Activated CD4-positive, alpha-beta memory T cell treated with anti-CD3 and anti-CD28 coated beads for 36 hours (primary cell): ENCODE measurements at regions of chr16 and their contacts with region 1.

Region 1: DNA sequence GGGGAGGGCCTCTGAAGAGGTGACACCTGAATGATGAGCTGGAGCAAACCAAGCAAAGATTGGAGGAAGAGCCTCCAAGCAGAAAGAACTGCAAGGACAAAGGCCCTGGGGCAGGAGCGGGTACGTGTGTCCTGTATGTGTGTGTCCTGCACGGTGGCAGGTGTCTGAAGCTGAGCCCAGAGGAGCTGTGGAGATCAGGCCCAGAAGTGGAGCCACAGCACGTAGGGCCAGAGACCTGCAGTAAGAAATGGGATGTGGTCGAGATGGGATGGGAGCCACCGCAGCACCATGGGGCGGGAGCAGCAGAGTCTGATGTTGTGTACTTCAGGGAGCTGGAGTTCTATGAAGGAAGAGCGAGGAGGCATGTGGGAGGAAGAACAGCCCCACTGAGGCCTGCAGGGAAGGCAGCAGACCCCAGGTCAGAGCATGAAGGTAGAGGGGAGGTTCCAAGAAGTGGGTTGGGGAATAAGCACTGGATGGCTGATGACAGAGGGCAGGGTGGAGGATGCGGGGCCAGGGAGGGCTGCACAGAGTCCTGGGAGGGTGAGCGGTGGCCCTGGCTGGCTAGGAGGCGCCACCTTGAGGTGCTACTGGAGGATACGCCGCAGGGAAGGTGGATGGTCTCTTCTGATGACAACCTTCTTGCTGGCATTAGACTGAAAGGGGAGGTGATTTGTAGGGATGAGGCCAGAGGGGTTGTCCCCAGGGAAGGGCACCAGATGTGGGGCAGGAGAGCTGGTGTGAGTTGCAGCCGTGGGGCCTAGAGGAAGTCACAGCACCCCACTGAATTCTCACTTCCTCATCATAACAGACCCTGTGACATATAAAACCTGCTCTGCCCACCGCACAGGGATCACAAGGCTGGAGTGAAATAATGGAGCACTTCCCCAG is 10.6 kb upstream of the CETP start:
- DNase-seq: peak; percentile 77
- H3K4me3 Mint-ChIP-seq: no peak overlapping the region
- H3K27ac Mint-ChIP-seq: no peak overlapping the region
- H3K4me1 Mint-ChIP-seq: peaks cover 19% of the 10 kb centered on the region
- H3K27me3 Mint-ChIP-seq: no peaks in the 10 kb centered on the region

Region 2: GRCh38 chr16:56789360-56789759 is 161.8 kb before region 1 on chr16:
- CTCF ChIA-PET with region 1: interaction called, 7 read pairs
- POLR2A ChIA-PET with region 1: no interaction called
- intact Hi-C with region 1: loop called (anchors 5 kb)
- DNase-seq: peak; percentile 40
- H3K4me3 Mint-ChIP-seq: no peak overlapping the region
- H3K27ac Mint-ChIP-seq: no peak overlapping the region
- H3K4me1 Mint-ChIP-seq: peaks cover under 1% of the 10 kb centered on the region
- H3K27me3 Mint-ChIP-seq: no peaks in the 10 kb centered on the region

Region 3: GRCh38 chr16:56860226-56861020 is 90.7 kb before region 1 on chr16:
- CTCF ChIA-PET with region 1: interaction called, 81 read pairs
- POLR2A ChIA-PET with region 1: interaction called, 4 read pairs
- intact Hi-C with region 1: no loop called
- DNase-seq: peak; percentile 81
- H3K4me3 Mint-ChIP-seq: peak overlapping the region; percentile 33
- H3K27ac Mint-ChIP-seq: peak overlapping the region; percentile 67
- H3K4me1 Mint-ChIP-seq: peaks cover 40% of the 10 kb centered on the region
- H3K27me3 Mint-ChIP-seq: no peaks in the 10 kb centered on the region

Region 4: DNA sequence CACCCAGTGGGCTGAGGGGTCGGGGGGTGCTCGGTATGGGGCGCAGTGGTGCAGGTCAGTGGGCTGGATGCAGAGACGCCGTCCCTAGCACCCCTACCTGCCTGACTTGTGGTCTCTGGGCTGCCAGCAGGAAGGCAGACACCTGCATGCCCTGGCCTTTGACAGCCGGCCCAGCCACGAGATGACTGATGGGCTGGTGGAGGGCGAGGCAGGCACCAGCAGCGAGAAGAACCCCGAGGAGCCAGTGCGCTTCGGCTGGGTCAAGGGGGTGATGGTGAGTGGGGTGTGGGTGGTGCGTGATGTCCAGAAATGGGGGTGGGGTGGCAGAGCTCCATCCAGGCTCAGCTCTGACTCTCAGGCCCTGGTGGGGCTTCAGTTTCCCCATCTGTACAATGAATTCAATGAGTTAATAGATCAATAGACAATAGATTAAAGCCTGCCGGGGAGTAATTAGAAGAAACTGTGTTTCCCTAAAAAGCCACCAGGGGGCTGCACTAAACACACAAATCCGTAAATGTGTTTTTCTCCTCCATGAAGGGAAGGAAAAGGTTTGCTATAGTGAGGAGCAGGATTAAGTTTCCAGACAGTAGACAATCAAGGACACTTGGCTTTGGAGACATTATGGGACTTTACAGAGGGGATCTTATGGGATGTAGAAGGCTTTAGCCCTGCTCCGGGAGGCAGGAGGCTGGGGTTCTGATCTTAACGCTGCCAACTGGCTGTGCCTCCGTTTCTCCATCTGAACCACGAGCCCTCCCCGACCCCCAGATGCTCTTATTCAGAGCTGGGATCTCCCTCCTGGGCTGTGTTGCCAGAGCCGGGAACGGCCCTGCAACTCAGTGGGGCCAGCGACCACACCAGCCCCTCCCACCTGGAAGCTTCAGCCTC is 83.9 kb before region 1 on chr16:
- CTCF ChIA-PET with region 1: interaction called, 81 read pairs
- POLR2A ChIA-PET with region 1: interaction called, 4 read pairs
- intact Hi-C with region 1: loop called (anchors 1 kb)
- DNase-seq: peak; percentile 48
- H3K4me3 Mint-ChIP-seq: no peak overlapping the region
- H3K27ac Mint-ChIP-seq: no peak overlapping the region
- H3K4me1 Mint-ChIP-seq: peaks cover 10% of the 10 kb centered on the region
- H3K27me3 Mint-ChIP-seq: no peaks in the 10 kb centered on the region

Region 5: DNA sequence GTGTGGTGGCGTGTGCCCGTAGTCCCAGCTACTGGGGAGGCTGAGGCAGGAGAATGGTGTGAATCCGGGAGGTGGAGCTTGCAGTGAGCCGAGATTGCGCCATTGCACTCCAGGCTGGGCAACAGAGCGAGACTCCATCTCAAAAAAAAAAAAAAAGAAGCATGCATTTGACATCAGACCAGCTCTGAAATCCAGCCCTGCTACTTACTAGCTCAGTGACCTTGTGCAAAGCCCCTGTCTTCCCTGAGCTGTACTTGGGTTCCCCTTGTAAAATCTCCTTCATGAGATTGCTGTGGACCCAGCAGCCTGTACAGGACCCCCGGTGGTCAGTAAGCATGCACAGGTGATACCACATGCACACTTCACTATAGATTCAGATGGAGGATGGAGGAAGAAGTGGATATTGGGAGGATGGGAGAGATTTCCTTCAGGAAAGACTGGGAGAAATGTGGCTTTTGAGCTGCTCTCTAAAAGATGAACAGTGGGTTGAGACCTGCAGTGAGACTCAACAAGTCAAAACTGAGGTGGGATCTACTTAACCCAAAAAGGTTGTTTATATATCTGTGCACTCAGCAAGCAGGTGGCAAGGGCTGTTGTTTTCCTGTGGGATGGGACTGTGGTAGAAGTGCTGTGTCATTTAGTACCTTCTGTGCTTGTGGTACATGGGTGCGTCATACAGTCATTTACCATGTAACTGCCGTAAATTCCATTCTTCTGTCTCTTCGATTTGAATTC is 12.5 kb before region 1 on chr16:
- CTCF ChIA-PET with region 1: interaction called, 10 read pairs
- POLR2A ChIA-PET with region 1: interaction called, 49 read pairs
- intact Hi-C with region 1: no loop called
- DNase-seq: peak; percentile 83
- H3K4me3 Mint-ChIP-seq: peak overlapping the region; percentile 77
- H3K27ac Mint-ChIP-seq: peak overlapping the region; percentile 94
- H3K4me1 Mint-ChIP-seq: peaks cover 83% of the 10 kb centered on the region
- H3K27me3 Mint-ChIP-seq: no peaks in the 10 kb centered on the region